ENCODE measurements at regions of chr17 and their contacts with region 1.

Region 1: DNA sequence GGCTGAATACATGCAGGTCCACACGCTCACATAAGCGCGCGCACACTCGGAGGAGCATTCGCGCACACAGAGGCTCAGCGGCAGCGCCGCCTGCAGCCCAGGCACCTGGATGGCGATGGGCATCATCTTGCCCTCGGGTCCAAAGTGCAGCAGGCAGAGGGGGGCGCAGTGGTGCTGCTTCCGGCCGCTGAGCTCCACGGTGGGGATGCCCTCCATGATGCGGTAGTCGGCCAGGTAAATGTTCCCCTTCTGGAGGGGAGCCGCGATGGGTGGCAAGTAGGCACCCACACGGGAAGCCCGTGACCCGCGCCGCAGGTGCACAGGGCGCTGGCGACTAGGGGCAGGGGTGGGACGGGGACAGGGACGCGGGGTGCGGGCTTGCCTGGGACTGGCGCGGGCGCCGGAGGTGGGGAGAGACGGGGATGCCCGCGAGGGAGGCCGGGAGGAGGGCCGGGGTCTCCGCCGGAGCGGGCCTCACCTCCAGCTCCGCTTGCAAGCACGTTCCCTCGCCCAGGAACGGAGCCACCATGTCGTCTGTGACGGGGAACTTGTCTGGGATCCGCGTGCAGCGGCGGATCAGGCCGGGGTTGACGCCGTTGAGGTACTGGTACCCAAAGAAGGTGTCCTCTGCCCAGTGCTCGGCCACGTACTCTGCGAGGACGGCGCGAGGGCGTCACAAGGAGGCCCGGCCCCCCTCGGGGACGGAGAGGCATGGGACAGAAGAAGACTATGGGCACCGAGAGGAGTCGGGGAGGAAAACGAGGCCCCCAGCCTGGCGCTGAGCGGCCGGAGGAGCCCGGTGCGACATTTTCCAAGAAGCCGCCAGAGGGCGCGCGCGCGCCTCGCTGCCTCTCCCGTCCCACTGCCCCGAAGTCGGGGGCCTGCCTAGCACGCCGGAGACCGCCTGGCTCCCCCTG is 8.0 kb downstream of the ALOX12B start:
- DNase-seq: peak; percentile 15 to 38
- ATAC-seq: peak; percentile 91 to 94
- H3K4me3 ChIP-seq: peak overlapping the region; percentile 49 to 72 (median 53)
- H3K27ac ChIP-seq: no peak overlapping the region
- H3K4me1 ChIP-seq: peaks cover 4 to 13% of the 10 kb centered on the region in 2 donors
- H3K27me3 ChIP-seq: peaks cover 42 to 58% (median 57%) of the 10 kb centered on the region in 3 donors
- CTCF ChIP-seq: peak; percentile 68 to 93 (median 84)
- POLR2A ChIP-seq: no peak

Region 2: GRCh38 chr17:8138672-8139371 is 59.3 kb after region 1 on chr17:
- in situ Hi-C with region 1: no loop called
- intact Hi-C with region 1: no loop called
- DNase-seq: peak; percentile 82 to 93
- ATAC-seq: peak; percentile 66 to 74
- H3K4me3 ChIP-seq: peak overlapping the region; percentile 2 to 23 (median 2)
- H3K27ac ChIP-seq: peak overlapping the region; percentile 84 to 100 (median 100)
- H3K4me1 ChIP-seq: peaks cover 29 to 47% of the 10 kb centered on the region in 2 donors
- H3K27me3 ChIP-seq: no peaks in the 10 kb centered on the region
- CTCF ChIP-seq: peak; percentile 88 to 93 (median 89)
- POLR2A ChIP-seq: peak; percentile 64 to 78

Region 3: DNA sequence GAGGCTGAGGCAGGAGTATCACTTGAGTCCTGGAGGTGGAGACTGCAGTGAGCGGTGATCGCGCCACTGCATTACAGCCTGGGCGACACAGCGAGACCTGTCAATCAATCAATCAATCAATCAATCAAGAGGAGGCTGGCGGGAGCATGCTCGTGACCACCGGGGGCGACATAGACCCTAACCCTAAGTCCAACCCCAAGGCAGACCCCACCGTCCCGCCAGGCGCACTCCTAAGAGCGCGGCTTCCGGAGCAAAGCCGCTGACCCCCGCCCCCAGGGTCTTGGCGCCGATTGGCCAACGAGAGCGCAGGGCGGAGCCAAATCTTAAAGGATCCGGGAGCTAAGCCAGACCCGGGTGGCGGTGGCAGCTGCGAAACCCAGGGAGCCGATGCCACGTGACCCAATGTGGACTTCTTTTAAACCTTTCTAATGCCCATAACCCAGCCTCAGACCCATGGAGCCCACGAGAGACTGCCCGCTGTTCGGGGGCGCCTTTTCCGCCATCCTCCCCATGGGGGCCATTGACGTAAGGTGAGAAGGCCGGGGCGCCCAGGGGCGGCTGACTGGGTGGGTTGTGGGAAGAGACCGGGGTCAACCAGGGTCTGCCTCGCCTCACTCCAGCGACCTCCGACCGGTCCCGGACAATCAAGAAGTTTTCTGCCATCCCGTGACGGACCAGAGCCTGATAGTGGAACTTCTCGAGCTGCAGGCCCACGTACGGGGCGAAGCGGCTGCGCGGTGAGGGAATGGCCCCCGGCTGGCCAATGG is 209.0 kb after region 1 on chr17 and contains the start of gene RANGRF:
- in situ Hi-C with region 1: loop called in 1 of 4 experiments (anchors 25 kb)
- intact Hi-C with region 1: loop called (anchors 10 kb)
- DNase-seq: peak; percentile 81 to 87
- ATAC-seq: peak; percentile 94 to 96
- H3K4me3 ChIP-seq: peak within 1 kb of the TSS; percentile 74 to 100 (median 96)
- H3K27ac ChIP-seq: peak within 1 kb of the TSS; percentile 89 to 100 (median 100)
- H3K4me1 ChIP-seq: peaks cover 16 to 24% of the 10 kb centered on the region in 2 donors
- H3K27me3 ChIP-seq: no peaks in the 10 kb centered on the region
- CTCF ChIP-seq: no peak
- POLR2A ChIP-seq: peak; percentile 59 to 68
- total RNA-seq, gene RANGRF: 6.9 to 21.2 (median 15.4) TPM

Region 4: DNA sequence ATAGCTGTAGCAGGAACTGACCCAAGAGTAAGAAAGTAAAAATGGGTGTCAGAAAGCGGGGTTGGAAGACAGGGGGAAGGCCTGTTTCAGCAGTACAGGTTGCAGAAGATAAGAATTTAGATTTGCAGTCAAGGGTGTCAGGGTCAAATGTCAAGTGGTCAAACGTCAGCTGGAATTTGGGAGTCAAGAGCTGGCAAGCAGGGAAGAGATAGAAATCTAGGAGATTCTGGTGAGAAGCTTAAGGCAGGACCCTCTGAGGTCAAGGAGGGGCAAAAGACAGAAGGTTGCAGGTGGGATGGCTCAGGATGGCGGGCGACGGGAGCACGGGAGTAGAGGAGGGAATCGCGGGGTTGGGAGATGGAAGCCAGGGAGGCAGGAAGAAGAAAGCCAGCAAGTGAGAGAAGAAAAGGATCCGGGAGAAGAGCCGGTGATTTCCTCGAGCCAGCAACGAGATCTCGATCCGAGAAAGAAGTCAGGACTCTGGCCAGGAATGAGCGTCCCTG is 215.3 kb after region 1 on chr17:
- in situ Hi-C with region 1: loop called in 3 of 4 experiments (anchors 25 kb)
- intact Hi-C with region 1: loop called (anchors 10 kb)
- DNase-seq: no peak
- ATAC-seq: peak; percentile 29 to 35
- H3K4me3 ChIP-seq: peak overlapping the region; percentile 72 to 90 (median 83)
- H3K27ac ChIP-seq: peak overlapping the region; percentile 95 to 97 (median 96)
- H3K4me1 ChIP-seq: peaks cover 9 to 11% of the 10 kb centered on the region in 2 donors
- H3K27me3 ChIP-seq: no peaks in the 10 kb centered on the region
- CTCF ChIP-seq: no peak
- POLR2A ChIP-seq: no peak

Region 5: GRCh38 chr17:8300627-8301242 is 221.2 kb after region 1 on chr17:
- in situ Hi-C with region 1: loop called in 3 of 4 experiments (anchors 25 kb)
- intact Hi-C with region 1: loop called (anchors 10 kb)
- DNase-seq: peak; percentile 26 to 47
- ATAC-seq: peak; percentile 93
- H3K4me3 ChIP-seq: no peak overlapping the region
- H3K27ac ChIP-seq: no peak overlapping the region
- H3K4me1 ChIP-seq: no peaks in the 10 kb centered on the region
- H3K27me3 ChIP-seq: no peaks in the 10 kb centered on the region
- CTCF ChIP-seq: peak; percentile 63 to 85 (median 80)
- POLR2A ChIP-seq: no peak

Region 6: DNA sequence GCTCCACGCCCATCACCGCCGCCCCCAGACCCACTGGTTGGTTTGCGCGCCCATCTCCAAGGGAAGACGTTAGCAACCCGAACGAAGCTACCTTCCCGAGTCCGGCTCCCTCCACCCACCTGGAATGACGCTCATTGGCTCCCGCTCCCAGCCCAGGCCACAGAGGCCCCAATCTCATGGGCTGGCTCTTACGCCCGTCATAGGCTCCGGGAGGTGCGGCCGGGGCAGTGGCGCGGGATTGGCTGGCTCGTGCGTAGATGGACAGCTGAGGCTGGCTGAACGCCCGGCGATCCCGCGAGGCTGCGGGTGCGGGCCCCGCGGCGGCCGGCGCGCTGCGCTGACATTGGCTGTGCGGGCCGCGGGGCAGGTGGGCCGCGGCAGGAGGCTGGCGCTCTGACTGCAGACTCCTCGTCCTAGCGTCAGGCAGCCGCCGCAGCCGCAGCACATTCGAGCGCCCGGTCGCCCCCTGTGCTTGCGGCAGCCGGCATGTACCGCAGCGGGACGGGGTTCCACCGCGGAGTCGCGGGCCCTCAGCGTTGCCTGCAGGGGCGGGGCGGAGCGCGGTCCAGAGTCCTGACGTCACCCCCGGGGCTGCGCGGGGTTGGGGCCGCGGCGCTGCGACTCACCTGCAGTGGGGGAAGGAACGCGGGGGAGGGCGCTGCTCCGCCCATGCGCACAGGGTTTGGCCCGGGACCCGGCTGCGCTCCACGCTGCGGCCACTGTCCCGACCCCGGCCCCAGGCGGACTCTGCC is 551.4 kb after region 1 on chr17:
- in situ Hi-C with region 1: no loop called
- intact Hi-C with region 1: no loop called
- DNase-seq: peak; percentile 94 to 95
- ATAC-seq: peak; percentile 97 to 98
- H3K4me3 ChIP-seq: peak overlapping the region; percentile 80 to 96 (median 92)
- H3K27ac ChIP-seq: peak overlapping the region; percentile 71 to 80 (median 74)
- H3K4me1 ChIP-seq: peaks cover 0 to 10% of the 10 kb centered on the region in 2 donors
- H3K27me3 ChIP-seq: peaks cover 0 to 6% (median 0%) of the 10 kb centered on the region in 3 donors
- CTCF ChIP-seq: peak in 2 of 5 experiments; percentile 18 to 21
- POLR2A ChIP-seq: peak; percentile 9 to 13

Region 7: GRCh38 chr17:8718001-8718563 is 638.5 kb after region 1 on chr17:
- in situ Hi-C with region 1: no loop called
- intact Hi-C with region 1: no loop called
- DNase-seq: no peak
- ATAC-seq: no peak
- H3K4me3 ChIP-seq: no peak overlapping the region
- H3K27ac ChIP-seq: no peak overlapping the region
- H3K4me1 ChIP-seq: no peaks in the 10 kb centered on the region
- H3K27me3 ChIP-seq: no peaks in the 10 kb centered on the region
- CTCF ChIP-seq: no peak
- POLR2A ChIP-seq: no peak